B cell (primary cell): ENCODE measurements at regions of chr9 and their contacts with region 1.

Region 1: GRCh38 chr9:68584189-68585033 is 43.7 kb upstream of the TMEM252 start:
- DNase-seq: peak; percentile 93
- ATAC-seq: peak; percentile 100
- H3K4me3 ChIP-seq: peak overlapping the region in 1 of 5 experiments; percentile 25
- H3K4me3 Mint-ChIP-seq: peak overlapping the region; percentile 67
- H3K27ac ChIP-seq: no peak overlapping the region
- H3K27ac Mint-ChIP-seq: peak overlapping the region; percentile 76
- H3K4me1 ChIP-seq: peaks cover 10 to 12% of the 10 kb centered on the region in 2 donors
- H3K4me1 Mint-ChIP-seq: peaks cover 29% of the 10 kb centered on the region
- H3K27me3 ChIP-seq: no peaks in the 10 kb centered on the region
- H3K27me3 Mint-ChIP-seq: no peaks in the 10 kb centered on the region
- CTCF ChIP-seq: peak; percentile 100

Region 2: DNA sequence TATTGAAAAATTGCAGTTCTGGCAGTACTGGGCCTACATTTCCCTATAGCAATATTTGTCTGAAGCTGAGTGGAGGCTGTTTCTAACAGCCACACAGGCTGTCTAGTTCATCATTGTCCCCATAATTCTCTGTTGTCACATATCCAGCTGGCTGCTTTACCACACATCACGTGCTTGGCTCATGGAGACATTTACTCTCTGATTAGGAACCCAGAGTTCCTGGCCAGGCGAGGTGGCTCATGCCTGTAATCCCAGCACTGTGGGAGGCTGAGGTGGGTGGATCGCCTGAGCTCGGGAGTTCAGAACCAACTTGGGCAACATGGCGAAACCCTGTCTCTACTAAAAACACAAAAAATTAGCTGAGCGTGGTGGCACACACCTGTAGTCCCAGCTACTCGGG is 146.6 kb before region 1 on chr9:
- CTCF ChIA-PET with region 1: no interaction called
- POLR2A ChIA-PET with region 1: no interaction called
- intact Hi-C with region 1: no loop called
- DNase-seq: no peak
- ATAC-seq: no peak
- H3K4me3 ChIP-seq: no peak overlapping the region
- H3K4me3 Mint-ChIP-seq: no peak overlapping the region
- H3K27ac ChIP-seq: no peak overlapping the region
- H3K27ac Mint-ChIP-seq: no peak overlapping the region
- H3K4me1 ChIP-seq: no peaks in the 10 kb centered on the region
- H3K4me1 Mint-ChIP-seq: peaks cover 7% of the 10 kb centered on the region
- H3K27me3 ChIP-seq: peaks cover 0 to 5% (median 1%) of the 10 kb centered on the region in 4 experiments
- H3K27me3 Mint-ChIP-seq: peaks cover 33% of the 10 kb centered on the region
- CTCF ChIP-seq: no peak

Region 3: GRCh38 chr9:68515326-68515901 is 69.0 kb before region 1 on chr9:
- CTCF ChIA-PET with region 1: no interaction called
- POLR2A ChIA-PET with region 1: no interaction called
- intact Hi-C with region 1: no loop called
- DNase-seq: no peak
- ATAC-seq: no peak
- H3K4me3 ChIP-seq: no peak overlapping the region
- H3K4me3 Mint-ChIP-seq: no peak overlapping the region
- H3K27ac ChIP-seq: no peak overlapping the region
- H3K27ac Mint-ChIP-seq: no peak overlapping the region
- H3K4me1 ChIP-seq: no peaks in the 10 kb centered on the region
- H3K4me1 Mint-ChIP-seq: no peaks in the 10 kb centered on the region
- H3K27me3 ChIP-seq: peaks cover 0 to 3% (median 0%) of the 10 kb centered on the region in 4 experiments
- H3K27me3 Mint-ChIP-seq: peaks cover 11% of the 10 kb centered on the region
- CTCF ChIP-seq: no peak

Region 4: GRCh38 chr9:68567565-68567964 is 16.8 kb before region 1 on chr9:
- CTCF ChIA-PET with region 1: interaction called, 22 read pairs
- POLR2A ChIA-PET with region 1: no interaction called
- intact Hi-C with region 1: no loop called
- DNase-seq: no peak
- ATAC-seq: no peak
- H3K4me3 ChIP-seq: no peak overlapping the region
- H3K4me3 Mint-ChIP-seq: no peak overlapping the region
- H3K27ac ChIP-seq: no peak overlapping the region
- H3K27ac Mint-ChIP-seq: no peak overlapping the region
- H3K4me1 ChIP-seq: no peaks in the 10 kb centered on the region
- H3K4me1 Mint-ChIP-seq: peaks cover 4% of the 10 kb centered on the region
- H3K27me3 ChIP-seq: peaks cover 0 to 3% (median 0%) of the 10 kb centered on the region in 4 experiments
- H3K27me3 Mint-ChIP-seq: peaks cover 12% of the 10 kb centered on the region
- CTCF ChIP-seq: no peak

Region 5: DNA sequence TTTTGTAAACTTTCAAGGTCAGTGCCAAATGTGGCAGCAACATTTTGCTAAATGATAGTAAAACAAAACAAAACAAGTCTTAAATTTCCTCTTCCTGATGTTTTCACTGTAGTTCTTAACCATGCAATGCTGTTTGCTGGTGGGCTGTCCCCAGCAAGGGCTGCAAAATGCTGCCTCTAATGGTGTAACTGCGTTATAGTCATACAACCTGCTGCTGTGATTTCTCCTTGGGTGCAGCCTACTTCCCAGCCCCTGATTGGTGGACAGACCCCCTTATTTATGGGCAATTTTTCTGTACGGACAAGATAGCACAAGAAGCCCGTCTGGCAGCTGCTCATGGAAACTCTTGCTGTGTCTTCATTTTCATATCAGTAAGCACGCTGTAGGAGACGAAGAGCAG is 94.0 kb after region 1 on chr9:
- CTCF ChIA-PET with region 1: interaction called, 15 read pairs
- POLR2A ChIA-PET with region 1: no interaction called
- intact Hi-C with region 1: no loop called
- DNase-seq: peak; percentile 46
- ATAC-seq: peak; percentile 74
- H3K4me3 ChIP-seq: no peak overlapping the region
- H3K4me3 Mint-ChIP-seq: peak overlapping the region; percentile 2
- H3K27ac ChIP-seq: no peak overlapping the region
- H3K27ac Mint-ChIP-seq: no peak overlapping the region
- H3K4me1 ChIP-seq: peaks cover 22 to 25% of the 10 kb centered on the region in 2 donors
- H3K4me1 Mint-ChIP-seq: peaks cover 22% of the 10 kb centered on the region
- H3K27me3 ChIP-seq: no peaks in the 10 kb centered on the region
- H3K27me3 Mint-ChIP-seq: no peaks in the 10 kb centered on the region
- CTCF ChIP-seq: peak; percentile 44

Region 6: DNA sequence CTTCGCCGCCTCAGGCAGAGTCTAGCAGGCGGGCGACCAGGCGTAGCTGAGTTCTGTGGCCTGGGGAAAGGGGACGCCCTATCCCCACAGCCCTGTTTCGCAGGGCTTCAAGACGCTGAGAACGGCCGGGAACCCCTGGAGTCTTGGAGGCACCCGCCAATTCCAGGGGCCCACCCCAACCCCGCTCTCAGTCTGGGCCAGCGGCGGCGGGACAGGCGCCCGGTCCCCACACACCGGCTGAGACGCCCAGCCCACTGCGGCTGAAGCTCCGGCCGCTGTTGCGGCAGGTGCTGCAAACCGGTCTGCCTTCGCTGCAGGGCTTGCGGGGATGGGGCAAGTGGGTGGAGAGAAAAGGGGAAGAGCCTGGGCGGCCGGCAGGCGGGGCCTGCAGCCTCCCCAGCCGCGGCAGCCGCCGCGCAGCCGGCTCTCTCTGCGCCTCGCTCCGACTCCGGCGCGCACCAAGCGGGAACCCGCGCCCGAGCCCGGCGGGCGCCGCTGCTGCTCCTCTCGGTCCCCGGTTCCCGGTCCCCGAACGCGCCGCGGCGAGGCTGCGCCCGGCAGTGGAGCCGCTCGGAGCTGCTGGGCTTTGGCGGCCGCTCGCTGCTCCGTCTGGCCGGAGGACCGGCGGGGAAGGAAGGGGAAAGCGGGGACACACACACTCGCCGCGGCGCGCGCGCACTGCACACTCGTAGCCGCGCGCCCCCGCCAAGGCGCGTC is 120.6 kb after region 1 on chr9 and contains the start of gene PIP5K1B:
- CTCF ChIA-PET with region 1: interaction called, 10 read pairs
- POLR2A ChIA-PET with region 1: no interaction called
- intact Hi-C with region 1: loop called (anchors 1 kb)
- DNase-seq: peak; percentile 90
- ATAC-seq: peak; percentile 88
- H3K4me3 ChIP-seq: peak within 1 kb of the TSS; percentile 78 to 88 (median 83)
- H3K4me3 Mint-ChIP-seq: peak within 1 kb of the TSS; percentile 87
- H3K27ac ChIP-seq: peak within 1 kb of the TSS; percentile 56 to 66
- H3K27ac Mint-ChIP-seq: peak within 1 kb of the TSS; percentile 98
- H3K4me1 ChIP-seq: peaks cover 42 to 43% of the 10 kb centered on the region in 2 donors
- H3K4me1 Mint-ChIP-seq: peaks cover 50% of the 10 kb centered on the region
- H3K27me3 ChIP-seq: no peaks in the 10 kb centered on the region
- H3K27me3 Mint-ChIP-seq: no peaks in the 10 kb centered on the region
- CTCF ChIP-seq: no peak
- total RNA-seq, gene PIP5K1B: 24.1 and 28.2 TPM in 2 replicates

Region 7: DNA sequence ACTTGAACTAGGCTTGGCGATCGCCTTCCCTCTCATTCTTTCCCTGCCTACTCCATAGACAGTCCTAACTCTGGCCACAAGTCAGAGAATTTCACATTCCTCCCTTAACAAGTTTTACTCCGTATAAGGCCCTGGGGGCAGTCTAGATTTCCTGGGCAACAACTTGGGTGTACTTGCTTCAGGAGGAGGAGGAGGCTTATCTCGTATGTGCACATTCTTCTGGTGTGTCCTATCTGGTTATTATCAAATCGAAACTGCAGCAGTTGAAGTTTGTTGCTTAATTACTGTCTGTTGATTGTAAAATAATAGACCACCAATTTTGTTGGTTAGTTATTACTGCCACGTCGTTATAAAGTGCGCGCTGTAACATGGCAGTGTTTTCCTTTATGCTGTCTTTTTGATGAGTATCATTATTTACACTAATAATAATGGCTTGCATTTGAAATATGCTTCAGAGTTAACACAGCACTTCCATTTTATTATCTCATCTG is 162.7 kb after region 1 on chr9:
- CTCF ChIA-PET with region 1: no interaction called
- POLR2A ChIA-PET with region 1: no interaction called
- intact Hi-C with region 1: no loop called
- DNase-seq: no peak
- ATAC-seq: no peak
- H3K4me3 ChIP-seq: no peak overlapping the region
- H3K4me3 Mint-ChIP-seq: no peak overlapping the region
- H3K27ac ChIP-seq: no peak overlapping the region
- H3K27ac Mint-ChIP-seq: no peak overlapping the region
- H3K4me1 ChIP-seq: no peaks in the 10 kb centered on the region
- H3K4me1 Mint-ChIP-seq: peaks cover 22% of the 10 kb centered on the region
- H3K27me3 ChIP-seq: no peaks in the 10 kb centered on the region
- H3K27me3 Mint-ChIP-seq: no peaks in the 10 kb centered on the region
- CTCF ChIP-seq: no peak

Region 8: DNA sequence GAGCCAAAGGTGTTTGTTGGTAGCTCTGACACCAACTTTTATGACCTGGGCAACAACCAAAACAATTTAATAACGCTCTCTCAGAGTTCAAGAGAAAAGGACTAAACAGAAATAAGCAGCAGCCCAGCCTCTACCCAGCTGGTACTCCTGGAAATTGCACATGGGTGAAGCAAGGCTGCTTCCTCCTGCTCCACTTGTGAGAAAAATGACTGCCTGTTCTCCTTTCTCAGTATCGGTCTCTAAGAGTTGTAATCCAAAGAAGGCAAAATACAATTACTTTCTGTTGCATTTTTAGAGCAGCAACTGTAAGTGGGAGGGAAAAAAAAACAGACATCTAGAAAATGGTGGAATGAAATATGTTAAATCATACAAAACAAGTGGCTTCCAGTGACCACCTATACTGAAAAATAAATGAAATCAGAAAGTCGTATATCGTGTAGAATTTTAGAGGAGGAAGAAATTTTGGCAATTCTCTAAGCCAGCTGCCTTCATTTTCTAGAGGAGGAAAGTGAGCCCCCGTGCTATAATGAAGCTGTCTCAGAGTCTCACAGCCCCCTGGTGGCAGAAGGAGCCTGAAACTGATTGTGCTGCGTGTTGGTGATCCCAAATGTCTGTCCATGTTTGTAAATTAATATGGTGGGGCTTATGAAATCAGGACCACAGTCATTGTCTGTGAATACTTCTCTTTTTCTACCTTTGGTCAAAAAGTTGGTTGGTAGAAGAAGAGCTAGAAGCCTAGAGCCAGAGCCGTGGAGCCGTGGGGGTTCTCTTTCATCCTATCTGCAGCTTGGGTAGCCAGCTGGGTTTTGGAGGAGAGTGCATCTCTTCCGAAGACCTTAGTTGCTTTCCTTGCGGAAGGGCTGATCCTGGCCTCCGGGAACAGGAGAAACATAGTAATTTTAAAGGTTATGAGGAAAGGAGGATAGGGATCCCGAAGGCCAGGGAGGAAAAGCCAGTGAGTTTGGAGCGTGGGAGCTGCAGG is 260.5 kb after region 1 on chr9:
- CTCF ChIA-PET with region 1: interaction called, 16 read pairs
- POLR2A ChIA-PET with region 1: no interaction called
- intact Hi-C with region 1: loop called (anchors 1 kb)
- DNase-seq: peak; percentile 55
- ATAC-seq: peak; percentile 53
- H3K4me3 ChIP-seq: no peak overlapping the region
- H3K4me3 Mint-ChIP-seq: no peak overlapping the region
- H3K27ac ChIP-seq: no peak overlapping the region
- H3K27ac Mint-ChIP-seq: no peak overlapping the region
- H3K4me1 ChIP-seq: peaks cover 9 to 12% of the 10 kb centered on the region in 2 donors
- H3K4me1 Mint-ChIP-seq: peaks cover 27% of the 10 kb centered on the region
- H3K27me3 ChIP-seq: no peaks in the 10 kb centered on the region
- H3K27me3 Mint-ChIP-seq: no peaks in the 10 kb centered on the region
- CTCF ChIP-seq: peak; percentile 58

Region 9: GRCh38 chr9:68999393-69000105 is 415.1 kb after region 1 on chr9:
- CTCF ChIA-PET with region 1: interaction called, 15 read pairs
- POLR2A ChIA-PET with region 1: interaction called, 6 read pairs
- intact Hi-C with region 1: loop called (anchors 1 kb)
- DNase-seq: peak; percentile 74
- ATAC-seq: peak; percentile 92
- H3K4me3 ChIP-seq: no peak overlapping the region
- H3K4me3 Mint-ChIP-seq: no peak overlapping the region
- H3K27ac ChIP-seq: no peak overlapping the region
- H3K27ac Mint-ChIP-seq: peak overlapping the region; percentile 16
- H3K4me1 ChIP-seq: peaks cover 0 to 7% of the 10 kb centered on the region in 2 donors
- H3K4me1 Mint-ChIP-seq: peaks cover 21% of the 10 kb centered on the region
- H3K27me3 ChIP-seq: no peaks in the 10 kb centered on the region
- H3K27me3 Mint-ChIP-seq: no peaks in the 10 kb centered on the region
- CTCF ChIP-seq: peak; percentile 82